Lower leg skin (tissue), 4 donors: ENCODE measurements at regions of chr16 and their contacts with region 1.

Region 1: GRCh38 chr16:71499775-71500364 is 10.7 kb upstream of the ZNF19 start:
- DNase-seq: peak in 1 of 2 donors; percentile 18
- H3K4me3 ChIP-seq: no peak overlapping the region
- CTCF ChIP-seq: no peak
- POLR2A ChIP-seq: no peak

Region 2: DNA sequence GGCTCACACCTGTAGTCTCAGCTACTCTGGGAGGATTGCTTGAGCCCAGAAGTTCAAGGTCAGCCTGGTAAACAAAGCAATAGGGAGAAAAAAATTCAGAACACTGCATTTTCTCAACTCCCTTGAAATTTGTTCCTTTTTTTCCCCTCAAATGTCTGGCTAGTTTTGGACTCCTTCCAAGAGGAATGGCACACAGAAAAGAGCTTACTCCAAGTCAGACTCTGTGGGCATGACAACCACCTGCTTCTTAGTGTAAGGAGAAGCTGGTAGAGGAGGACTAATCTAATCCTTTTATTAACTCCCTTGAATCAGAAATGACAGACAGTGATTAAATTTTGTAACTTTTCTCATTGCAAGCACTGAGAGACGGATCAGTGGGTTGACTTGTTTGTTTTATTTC is 241.5 kb before region 1 on chr16:
- intact Hi-C with region 1: no loop called
- DNase-seq: no peak
- H3K4me3 ChIP-seq: no peak overlapping the region
- CTCF ChIP-seq: no peak
- POLR2A ChIP-seq: no peak

Region 3: DNA sequence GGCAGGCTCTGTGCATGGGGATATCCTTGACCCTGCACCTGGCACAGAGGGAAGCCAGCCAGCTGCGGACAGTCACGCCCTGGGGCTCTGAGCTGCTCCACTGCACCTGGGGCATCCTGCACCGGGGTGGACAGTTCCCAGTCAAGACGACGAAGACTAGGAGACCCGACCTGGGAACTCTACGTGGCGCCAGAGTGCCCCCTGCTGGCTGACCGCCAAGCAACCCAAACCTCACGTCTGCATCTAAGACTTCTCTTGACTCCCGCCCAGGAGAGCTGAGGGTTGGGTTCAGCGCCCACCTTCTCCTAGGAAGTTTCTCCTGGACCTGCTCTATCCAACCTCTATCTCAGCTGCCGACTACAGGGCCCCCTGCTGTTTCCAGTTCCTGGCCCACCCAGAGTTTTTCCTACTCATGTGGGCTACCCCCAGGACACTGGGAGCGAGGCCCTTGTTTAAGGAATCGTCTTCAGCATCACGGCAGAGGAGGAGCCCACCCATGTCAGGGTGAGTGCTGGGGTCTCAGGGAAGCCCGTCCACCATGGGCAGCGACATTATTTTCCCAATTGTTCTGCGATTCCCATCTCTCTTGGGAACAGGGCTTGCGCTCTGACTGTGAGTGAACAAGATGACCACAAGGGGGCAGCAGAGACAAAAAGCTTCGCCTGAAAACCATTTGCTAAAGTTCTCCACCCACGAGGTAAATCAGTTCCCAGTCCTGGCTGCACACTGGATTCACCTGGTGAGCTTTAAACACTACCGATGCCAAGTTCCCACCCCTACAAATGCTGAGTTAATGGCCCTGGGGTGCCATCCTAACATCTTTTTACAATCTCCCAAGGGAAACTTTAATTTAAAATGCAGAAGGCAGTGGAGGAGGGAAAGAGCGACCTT is 87.4 kb before region 1 on chr16:
- intact Hi-C with region 1: loop called (anchors 10 kb)
- DNase-seq: peak; percentile 67 to 90
- H3K4me3 ChIP-seq: no peak overlapping the region
- CTCF ChIP-seq: peak in 1 of 3 donors; percentile 21
- POLR2A ChIP-seq: no peak